Ascending aorta (tissue), 2 donors: ENCODE measurements at regions of chrX and their contacts with region 1.

Region 1: GRCh38 chrX:63350941-63351616 is at the start of gene SPIN4:
- DNase-seq: peak; percentile 39 to 91
- H3K4me3 ChIP-seq: peak within 1 kb of the TSS; percentile 66 to 68
- H3K27ac ChIP-seq: peak within 1 kb of the TSS; percentile 70 to 72
- H3K4me1 ChIP-seq: no peaks in the 10 kb centered on the region
- H3K27me3 ChIP-seq: no peaks in the 10 kb centered on the region
- CTCF ChIP-seq: no peak
- total RNA-seq, gene SPIN4: 9.2 TPM

Region 2: GRCh38 chrX:63394872-63395271 is 43.8 kb after region 1 on chrX:
- intact Hi-C with region 1: no loop called
- DNase-seq: no peak
- H3K4me3 ChIP-seq: no peak overlapping the region
- H3K27ac ChIP-seq: no peak overlapping the region
- H3K4me1 ChIP-seq: no peaks in the 10 kb centered on the region
- H3K27me3 ChIP-seq: no peaks in the 10 kb centered on the region
- CTCF ChIP-seq: no peak

Region 3: GRCh38 chrX:63761639-63762038 is 410.6 kb after region 1 on chrX:
- intact Hi-C with region 1: loop called (anchors 5 kb)
- DNase-seq: no peak
- H3K4me3 ChIP-seq: no peak overlapping the region
- H3K27ac ChIP-seq: peak overlapping the region; percentile 45 to 72
- H3K4me1 ChIP-seq: no peaks in the 10 kb centered on the region
- H3K27me3 ChIP-seq: no peaks in the 10 kb centered on the region
- CTCF ChIP-seq: peak in 2 of 3 experiments; percentile 30 to 41

Region 4: DNA sequence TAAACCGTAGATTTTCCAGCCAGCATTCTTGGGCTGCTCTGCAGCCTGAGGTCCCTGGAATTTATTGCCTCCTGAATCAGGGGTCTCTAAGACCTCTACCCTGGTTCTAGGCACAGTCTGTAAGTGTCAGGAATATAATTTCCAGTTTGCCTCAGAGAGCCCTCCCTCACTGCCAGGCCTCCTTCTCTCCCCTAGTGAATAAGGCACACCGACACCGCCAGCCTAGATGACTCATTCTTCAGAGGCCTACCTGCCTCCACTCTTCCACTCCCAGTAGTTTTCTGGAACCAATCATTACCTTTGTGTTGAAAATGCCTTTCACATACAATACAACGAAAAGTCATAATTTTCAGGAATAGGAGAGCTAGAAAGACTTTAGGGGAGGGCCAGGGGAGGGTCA is 484.3 kb after region 1 on chrX:
- intact Hi-C with region 1: no loop called
- DNase-seq: no peak
- H3K4me3 ChIP-seq: no peak overlapping the region
- H3K27ac ChIP-seq: no peak overlapping the region
- H3K4me1 ChIP-seq: no peaks in the 10 kb centered on the region
- H3K27me3 ChIP-seq: no peaks in the 10 kb centered on the region
- CTCF ChIP-seq: no peak